Heart left ventricle (tissue), 16 donors: ENCODE measurements at regions of chr5 and their contacts with region 1.

Region 1: GRCh38 chr5:139755892-139756671 is 39.5 kb upstream of the PSD2 start:
- DNase-seq: no peak
- ATAC-seq: no peak
- H3K4me3 ChIP-seq: peak overlapping the region in 7 of 12 donors; percentile 7 to 37 (median 26)
- H3K27ac ChIP-seq: no peak overlapping the region
- H3K4me1 ChIP-seq: peaks cover 0 to 11% (median 7%) of the 10 kb centered on the region in 12 donors
- H3K27me3 ChIP-seq: peaks cover 12 to 55% (median 37%) of the 10 kb centered on the region in 9 donors
- CTCF ChIP-seq: no peak
- POLR2A ChIP-seq: no peak

Region 2: DNA sequence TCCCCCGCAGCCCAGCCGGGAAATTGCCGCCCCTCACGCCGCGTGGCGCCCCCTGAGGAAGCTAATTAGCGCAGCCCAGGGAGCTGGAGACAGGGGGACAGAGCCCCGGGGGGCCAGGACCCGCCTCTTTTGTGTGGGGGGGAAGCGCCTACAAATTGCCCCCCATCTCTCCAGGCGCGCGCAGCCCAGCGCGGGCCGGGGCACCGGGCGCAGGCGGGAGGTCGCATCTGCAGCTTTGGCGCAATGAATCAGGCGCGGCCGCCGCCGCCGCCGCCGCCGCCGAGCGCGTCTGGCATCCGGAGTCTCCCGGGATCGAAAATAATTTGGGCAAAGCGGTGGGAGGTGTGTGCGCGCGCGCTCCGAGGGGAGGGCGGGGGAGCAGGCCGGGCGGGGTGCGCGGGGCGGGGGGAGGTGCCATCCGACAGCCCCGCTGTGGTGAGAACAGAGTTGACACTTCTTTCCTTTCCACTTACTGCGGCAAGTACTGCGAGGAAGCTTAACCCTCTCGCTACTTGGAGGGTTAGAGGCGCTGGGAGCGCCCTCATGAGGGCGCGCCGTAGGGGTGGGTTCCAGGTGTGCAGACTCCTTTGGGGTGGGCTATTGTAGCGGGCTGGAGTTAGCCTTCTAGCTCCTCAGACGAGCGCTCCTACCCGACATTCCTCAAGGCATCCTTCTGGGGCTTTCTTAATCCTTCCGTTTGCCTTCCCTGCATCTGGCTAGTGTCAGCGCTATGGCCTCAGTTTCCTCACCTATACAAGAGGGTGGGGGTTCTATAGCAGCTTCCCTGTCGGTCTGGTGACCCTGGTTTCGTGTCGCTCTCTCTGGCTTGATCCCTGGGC is 44.8 kb before region 1 on chr5:
- intact Hi-C with region 1: loop called in 5 of 10 experiments (anchors 5 to 10 kb)
- DNase-seq: peak in 3 of 5 donors; percentile 47 to 56 (median 51)
- ATAC-seq: peak in 2 of 4 donors; percentile 16 to 24
- H3K4me3 ChIP-seq: peak overlapping the region; percentile 33 to 65 (median 58)
- H3K27ac ChIP-seq: peak overlapping the region in 9 of 12 donors; percentile 24 to 88 (median 77)
- H3K4me1 ChIP-seq: peaks cover 14 to 37% (median 33%) of the 10 kb centered on the region in 12 donors
- H3K27me3 ChIP-seq: peaks cover 0 to 26% (median 0%) of the 10 kb centered on the region in 9 donors
- CTCF ChIP-seq: peak in 3 of 12 donors; percentile 4 to 12 (median 6)
- POLR2A ChIP-seq: no peak

Region 3: DNA sequence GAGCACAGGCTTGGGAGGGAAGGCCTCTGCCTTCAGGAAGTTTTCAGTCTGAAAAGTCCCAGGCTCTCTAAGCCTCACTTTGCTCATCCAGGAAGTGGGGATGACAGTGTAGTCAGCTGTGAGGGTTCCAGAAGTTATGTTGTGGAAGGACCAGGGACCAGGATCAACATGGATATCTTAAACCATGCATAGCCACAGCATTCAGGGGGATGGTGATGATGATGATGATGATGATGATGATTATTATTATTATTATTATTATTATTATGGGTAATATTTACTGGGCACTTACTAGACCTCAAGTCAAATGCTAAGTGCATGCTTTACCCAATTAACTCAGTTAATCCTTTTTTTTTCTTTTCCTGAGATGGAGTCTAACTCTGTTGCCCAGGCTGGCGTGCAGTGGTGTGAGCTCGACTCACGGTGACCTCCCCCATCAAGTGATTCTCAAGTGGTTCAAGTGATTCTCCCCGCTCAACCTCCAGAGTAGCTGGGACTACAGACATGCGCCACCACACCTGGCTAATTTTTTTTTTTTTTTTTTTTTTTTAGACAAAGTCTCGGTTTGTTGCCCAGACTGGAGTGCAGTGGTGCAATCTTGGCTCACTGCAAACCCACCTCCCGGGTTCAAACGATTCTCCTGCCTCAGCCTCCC is 39.0 kb before region 1 on chr5:
- intact Hi-C with region 1: loop called in 5 of 10 experiments (anchors 5 to 10 kb)
- DNase-seq: no peak
- ATAC-seq: no peak
- H3K4me3 ChIP-seq: no peak overlapping the region
- H3K27ac ChIP-seq: no peak overlapping the region
- H3K4me1 ChIP-seq: no peaks in the 10 kb centered on the region
- H3K27me3 ChIP-seq: no peaks in the 10 kb centered on the region
- CTCF ChIP-seq: no peak
- POLR2A ChIP-seq: no peak

Region 4: DNA sequence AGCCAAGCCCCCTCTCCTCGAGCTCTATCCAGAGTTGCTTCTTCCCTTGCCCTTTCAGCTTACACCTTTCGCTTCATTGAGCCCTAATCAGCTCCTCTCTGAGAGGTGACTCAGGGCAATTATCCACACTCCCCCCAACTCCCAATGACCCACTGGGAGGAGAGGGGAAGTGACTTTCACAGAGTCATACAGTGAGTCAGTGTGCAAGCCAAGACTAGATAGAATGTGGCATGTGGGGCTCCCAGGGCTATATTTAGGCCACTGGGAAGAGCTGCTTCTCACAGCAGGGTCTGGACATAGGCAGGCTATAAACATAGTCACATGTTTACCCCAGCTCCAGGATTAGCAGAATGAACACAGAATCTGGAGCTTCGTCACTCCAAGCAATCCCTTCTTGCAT is 229.7 kb after region 1 on chr5:
- intact Hi-C with region 1: no loop called
- DNase-seq: peak in 3 of 5 donors; percentile 37 to 62 (median 61)
- ATAC-seq: peak; percentile 89 to 96 (median 94)
- H3K4me3 ChIP-seq: no peak overlapping the region
- H3K27ac ChIP-seq: peak overlapping the region in 11 of 12 donors; percentile 24 to 73 (median 67)
- H3K4me1 ChIP-seq: peaks cover 0 to 41% (median 18%) of the 10 kb centered on the region in 12 donors
- H3K27me3 ChIP-seq: no peaks in the 10 kb centered on the region
- CTCF ChIP-seq: no peak
- POLR2A ChIP-seq: no peak